HEK293T (cell line): ENCODE measurements at regions of chr7 and their contacts with region 1.

Region 1: DNA sequence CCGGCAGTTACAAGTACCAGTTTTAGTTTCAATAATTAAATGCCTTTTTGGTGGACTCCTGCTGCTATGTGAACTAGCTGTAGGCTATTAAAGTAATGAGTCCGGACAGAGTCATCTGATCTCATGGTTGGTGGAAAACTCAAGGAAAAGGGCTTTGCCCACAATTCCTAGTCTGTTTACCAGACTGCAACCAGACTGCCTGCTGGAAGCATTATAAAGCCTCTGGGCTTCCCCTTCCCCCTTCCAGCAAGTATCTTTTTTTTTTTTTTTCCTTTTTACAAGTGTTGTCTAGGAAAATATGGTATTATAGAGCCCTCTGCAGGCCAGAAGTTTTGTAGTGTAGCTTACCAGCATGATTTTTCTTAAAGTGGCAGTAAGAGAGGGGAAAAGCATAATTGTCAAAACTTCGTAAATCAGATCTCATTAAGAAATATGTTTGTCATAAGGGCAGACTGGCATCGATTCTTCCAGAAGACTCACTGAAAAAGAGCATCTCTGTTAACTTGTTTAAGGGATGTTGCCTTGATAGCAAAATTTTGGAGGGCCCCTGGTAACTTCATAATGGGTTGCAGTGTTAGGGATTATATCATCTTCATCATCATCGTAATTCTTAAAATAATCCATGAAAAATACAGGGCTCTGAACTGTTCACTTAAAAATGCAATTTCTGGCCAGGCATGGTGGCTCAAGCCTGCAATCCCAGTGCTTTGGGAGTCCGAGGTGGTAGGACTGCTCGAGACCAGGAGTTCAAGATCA is 181.3 kb downstream of the TAX1BP1 start:
- DNase-seq: peak; percentile 81

Region 2: DNA sequence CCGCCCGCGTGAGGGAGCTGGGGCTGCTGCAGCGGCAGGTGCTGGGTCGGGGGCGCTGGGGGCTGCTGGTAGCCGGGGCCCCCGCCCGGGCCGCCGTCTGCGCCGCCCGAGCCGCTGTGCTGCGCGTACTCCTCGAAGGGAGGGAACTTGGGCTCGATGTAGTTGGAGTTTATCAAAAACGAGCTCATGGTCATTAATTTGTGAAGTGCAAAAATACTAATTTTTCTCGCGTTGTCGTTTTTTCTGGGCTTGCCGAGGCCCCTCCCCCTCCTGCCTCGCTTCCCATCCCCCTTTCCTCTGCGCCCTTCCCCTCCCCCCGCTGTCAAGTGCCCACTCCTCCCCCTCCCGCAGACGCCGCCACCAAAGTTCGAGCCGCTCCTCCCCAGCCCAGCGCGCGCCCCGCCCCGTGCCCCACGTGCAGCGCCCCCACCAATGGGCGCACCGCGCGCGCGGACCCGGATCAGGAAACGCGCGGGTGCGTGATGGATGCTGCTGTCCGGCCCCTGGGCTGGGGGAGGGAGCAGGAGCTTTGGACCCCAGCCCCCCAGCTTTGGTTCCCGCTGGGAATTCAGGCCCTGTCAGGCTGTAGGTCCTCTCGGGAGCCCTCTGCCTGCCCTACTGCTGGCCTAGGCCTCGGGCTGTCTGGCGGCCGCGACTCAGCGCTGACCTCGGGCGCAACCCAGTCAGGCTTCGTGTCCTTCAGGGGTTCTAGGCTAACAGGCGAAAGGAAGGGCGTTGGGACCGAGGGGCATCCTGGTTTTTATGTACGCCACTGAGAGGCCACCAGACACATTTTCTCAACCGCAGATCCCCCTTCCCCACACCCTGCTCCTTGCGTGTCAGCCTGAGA is 790.5 kb before region 1 on chr7 and contains the start of gene HOXA4:
- CTCF ChIA-PET with region 1: no interaction called
- POLR2A ChIA-PET with region 1: no interaction called
- DNase-seq: peak; percentile 78

Region 3: GRCh38 chr7:27196287-27196767 is 724.9 kb before region 1 on chr7:
- CTCF ChIA-PET with region 1: interaction called, 10 read pairs
- POLR2A ChIA-PET with region 1: interaction called, 3 read pairs
- DNase-seq: no peak

Region 4: DNA sequence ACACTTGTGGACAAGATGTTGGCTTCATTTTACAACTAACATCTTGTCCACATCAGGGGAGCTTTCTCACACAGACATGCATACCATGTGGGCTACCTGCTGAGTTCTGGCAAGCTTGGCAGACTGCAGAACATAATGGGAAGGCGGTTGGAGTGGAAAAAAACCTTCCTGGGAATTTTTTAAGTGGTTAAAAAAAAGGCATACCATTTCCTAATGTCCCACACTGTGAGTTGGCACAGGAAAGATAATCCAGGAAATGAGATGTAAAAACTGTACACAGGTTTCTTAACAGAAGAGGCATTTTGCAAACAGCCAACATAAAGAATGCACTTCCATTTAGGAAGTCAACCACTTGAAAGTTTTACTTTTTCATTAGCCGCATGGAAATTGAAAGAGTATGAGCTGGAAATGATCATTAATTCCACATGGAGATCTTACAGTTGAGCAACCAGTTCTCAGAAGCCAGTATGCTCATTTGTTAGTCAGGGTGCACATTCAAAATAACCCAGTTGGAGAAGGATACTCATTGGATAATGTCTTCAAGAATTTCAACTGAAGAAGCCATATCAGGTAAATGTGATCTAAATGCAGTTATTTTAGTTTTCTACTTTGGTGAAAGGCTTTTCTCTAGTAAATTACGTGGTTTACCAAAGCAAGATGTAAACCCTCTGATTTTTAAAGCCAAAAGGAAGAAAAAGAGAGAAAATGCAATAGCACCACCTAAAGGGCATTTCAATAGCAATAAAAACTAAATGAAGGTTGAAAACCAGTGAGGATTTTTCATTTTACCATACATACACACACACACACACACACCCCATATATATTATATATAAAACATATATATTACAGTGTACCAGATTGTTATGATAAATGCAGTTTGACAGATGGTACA is 12.7 kb after region 1 on chr7:
- CTCF ChIA-PET with region 1: no interaction called
- POLR2A ChIA-PET with region 1: no interaction called
- DNase-seq: no peak